Prostate gland (tissue), 2 donors: ENCODE measurements at regions of chr17 and their contacts with region 1.

Region 1: GRCh38 chr17:10844621-10845387 is 6.9 kb upstream of the PIRT start:
- DNase-seq: peak; percentile 81
- H3K4me3 ChIP-seq: peak overlapping the region; percentile 31 to 43
- H3K27ac ChIP-seq: peak overlapping the region; percentile 76 to 80
- H3K4me1 ChIP-seq: no peaks in the 10 kb centered on the region
- H3K27me3 ChIP-seq: no peaks in the 10 kb centered on the region
- CTCF ChIP-seq: peak; percentile 87 to 98 (median 96)
- POLR2A ChIP-seq: no peak

Region 2: GRCh38 chr17:10618202-10618635 is 226.6 kb before region 1 on chr17:
- intact Hi-C with region 1: no loop called
- DNase-seq: peak; percentile 45
- H3K4me3 ChIP-seq: no peak overlapping the region
- H3K27ac ChIP-seq: no peak overlapping the region
- H3K4me1 ChIP-seq: no peaks in the 10 kb centered on the region
- H3K27me3 ChIP-seq: no peaks in the 10 kb centered on the region
- CTCF ChIP-seq: peak in 3 of 4 experiments; percentile 61 to 74 (median 71)
- POLR2A ChIP-seq: no peak

Region 3: GRCh38 chr17:10640475-10640874 is 204.3 kb before region 1 on chr17:
- intact Hi-C with region 1: loop called (anchors 5 kb)
- DNase-seq: no peak
- H3K4me3 ChIP-seq: no peak overlapping the region
- H3K27ac ChIP-seq: no peak overlapping the region
- H3K4me1 ChIP-seq: no peaks in the 10 kb centered on the region
- H3K27me3 ChIP-seq: no peaks in the 10 kb centered on the region
- CTCF ChIP-seq: no peak
- POLR2A ChIP-seq: no peak

Region 4: GRCh38 chr17:10697092-10698081 is 147.4 kb before region 1 on chr17 and contains the starts of genes ADPRM and SCO1:
- intact Hi-C with region 1: no loop called
- DNase-seq: peak; percentile 93
- H3K4me3 ChIP-seq: peak within 1 kb of the TSS; percentile 74 to 84
- H3K27ac ChIP-seq: peak within 1 kb of the TSS; percentile 94 to 98
- H3K4me1 ChIP-seq: peaks cover 3% of the 10 kb centered on the region
- H3K27me3 ChIP-seq: no peaks in the 10 kb centered on the region
- CTCF ChIP-seq: peak; percentile 10 to 67 (median 58)
- POLR2A ChIP-seq: peak; percentile 94
- total RNA-seq, gene ADPRM: 9.7 to 23.1 TPM
- total RNA-seq, gene SCO1: 21.7 to 38.3 TPM

Region 5: DNA sequence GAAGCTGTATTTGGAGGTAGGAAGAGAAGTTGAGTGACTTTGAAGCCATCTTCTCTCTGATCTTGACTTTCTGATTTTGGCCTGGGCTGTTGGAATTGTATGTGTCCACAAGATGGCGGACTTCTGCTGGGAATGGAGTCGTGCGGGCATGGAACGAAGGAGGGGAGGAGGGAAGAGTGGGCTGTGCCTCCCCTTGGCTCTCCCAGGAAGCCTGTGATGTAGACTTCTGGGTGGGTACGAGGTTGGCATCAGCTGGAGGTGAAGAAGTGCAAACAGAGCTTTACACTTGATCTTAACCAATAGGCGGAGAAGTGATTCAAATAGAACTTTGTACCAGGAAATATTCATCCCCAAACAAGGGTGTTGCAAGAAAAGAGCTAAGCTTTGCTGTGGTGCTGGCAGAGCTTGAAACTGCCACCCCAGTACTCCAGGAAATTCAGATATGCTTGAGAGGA is 107.6 kb before region 1 on chr17:
- intact Hi-C with region 1: loop called (anchors 1 kb)
- DNase-seq: peak; percentile 85
- H3K4me3 ChIP-seq: no peak overlapping the region
- H3K27ac ChIP-seq: peak overlapping the region; percentile 44 to 53
- H3K4me1 ChIP-seq: no peaks in the 10 kb centered on the region
- H3K27me3 ChIP-seq: no peaks in the 10 kb centered on the region
- CTCF ChIP-seq: peak; percentile 69 to 89 (median 85)
- POLR2A ChIP-seq: peak; percentile 11